ENCODE measurements at regions of chr3 and their contacts with region 1.

Region 1: DNA sequence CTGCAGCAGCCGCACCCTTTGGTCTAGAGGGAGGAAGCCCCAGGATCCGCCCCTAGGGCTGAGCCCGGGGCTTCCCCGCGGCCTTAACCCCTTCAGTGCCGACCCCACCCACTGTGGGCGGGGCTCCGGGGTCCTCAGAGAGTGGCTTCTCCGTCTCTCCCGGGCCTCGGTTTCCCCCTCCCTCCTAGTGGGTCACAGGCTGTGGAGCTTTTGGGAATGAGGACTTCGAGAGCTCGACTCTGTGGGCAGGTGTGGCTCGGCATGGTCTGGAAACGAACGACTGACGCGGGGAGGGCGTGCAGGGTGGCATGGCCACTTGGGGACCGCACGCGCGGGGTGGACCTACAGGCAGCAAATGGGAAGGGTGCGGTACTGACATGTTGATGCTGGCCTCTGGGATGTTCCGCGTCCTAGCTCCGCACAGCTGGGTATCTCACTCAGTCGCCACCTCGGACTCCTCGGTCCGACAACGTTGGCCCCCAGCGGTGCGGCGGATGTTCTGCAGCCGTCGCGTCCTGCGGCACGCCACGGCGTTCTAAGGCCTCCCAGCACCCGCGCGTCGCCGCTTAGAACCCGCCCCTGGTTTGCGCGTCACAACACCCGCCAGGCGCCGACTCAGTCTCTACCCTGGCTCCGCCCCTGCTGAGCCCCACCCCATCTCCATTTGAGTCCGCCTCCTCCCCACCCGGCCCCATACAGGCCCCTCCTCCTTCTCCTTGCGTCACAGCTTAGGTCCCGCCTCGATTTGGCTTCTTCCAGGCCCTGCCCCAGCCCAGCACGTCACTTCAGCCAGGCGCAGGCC is at the starts of genes HYAL3 and NAA80:
- DNase-seq: peak; percentile 100
- H3K4me3 ChIP-seq: peak within 1 kb of the TSS; percentile 74 to 85
- H3K4me3 Mint-ChIP-seq: peak within 1 kb of the TSS; percentile 95 to 100 (median 97)
- H3K27ac ChIP-seq: peak within 1 kb of the TSS; percentile 90
- H3K27ac Mint-ChIP-seq: peak within 1 kb of the TSS; percentile 95 to 100 (median 100)
- H3K4me1 ChIP-seq: peaks cover 25% of the 10 kb centered on the region
- H3K4me1 Mint-ChIP-seq: peaks cover 12 to 47% (median 26%) of the 10 kb centered on the region in 4 donors
- H3K27me3 ChIP-seq: no peaks in the 10 kb centered on the region
- H3K27me3 Mint-ChIP-seq: no peaks in the 10 kb centered on the region
- total RNA-seq, gene HYAL3: 5.1 to 5.4 TPM
- total RNA-seq, gene NAA80: 33.1 to 33.7 TPM

Region 2: DNA sequence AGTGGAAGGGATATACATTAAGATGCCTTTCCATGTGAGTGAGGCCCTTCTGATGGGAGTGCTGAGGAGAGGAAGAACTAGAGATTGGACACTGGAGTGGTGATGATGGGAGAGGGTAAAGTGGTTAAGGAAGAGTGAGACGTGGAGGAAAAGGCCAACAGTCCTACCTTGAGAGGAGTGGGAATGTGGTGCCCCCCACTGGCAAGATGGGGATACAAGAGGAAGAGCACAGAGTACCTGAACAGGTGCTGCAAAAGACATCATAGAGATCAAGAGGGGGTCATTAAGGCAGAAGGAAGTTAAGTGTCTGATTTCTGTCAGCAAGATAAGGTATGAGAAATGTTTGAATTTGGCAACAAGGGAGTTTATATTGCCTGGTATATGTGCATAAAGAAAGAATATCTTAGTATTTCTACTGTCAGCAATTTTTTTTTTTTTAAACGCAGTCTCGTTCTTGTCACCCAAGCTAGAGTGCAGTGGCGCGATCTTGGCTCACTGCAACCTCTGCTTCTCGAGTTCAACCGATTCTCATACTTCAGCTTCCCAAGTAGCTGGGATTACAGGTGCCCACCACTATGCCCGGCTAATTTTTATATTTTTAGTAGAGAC is 1346.4 kb before region 1 on chr3:
- CTCF ChIA-PET with region 1: no interaction called
- POLR2A ChIA-PET with region 1: no interaction called
- intact Hi-C with region 1: no loop called
- DNase-seq: peak; percentile 41 to 58 (median 51)
- H3K4me3 ChIP-seq: no peak overlapping the region
- H3K4me3 Mint-ChIP-seq: no peak overlapping the region
- H3K27ac ChIP-seq: no peak overlapping the region
- H3K27ac Mint-ChIP-seq: peak overlapping the region in 4 of 7 donors; percentile 17 to 78 (median 43)
- H3K4me1 ChIP-seq: peaks cover 6% of the 10 kb centered on the region
- H3K4me1 Mint-ChIP-seq: peaks cover 9 to 18% (median 10%) of the 10 kb centered on the region in 4 donors
- H3K27me3 ChIP-seq: no peaks in the 10 kb centered on the region
- H3K27me3 Mint-ChIP-seq: no peaks in the 10 kb centered on the region

Region 3: GRCh38 chr3:49939858-49940666 is 359.0 kb before region 1 on chr3 and contains the start of gene RBM6:
- CTCF ChIA-PET with region 1: no interaction called
- POLR2A ChIA-PET with region 1: no interaction called
- intact Hi-C with region 1: loop called (anchors 1 kb)
- DNase-seq: peak; percentile 92 to 97 (median 94)
- H3K4me3 ChIP-seq: peak within 1 kb of the TSS; percentile 75 to 96
- H3K4me3 Mint-ChIP-seq: peak within 1 kb of the TSS; percentile 94 to 99 (median 98)
- H3K27ac ChIP-seq: peak within 1 kb of the TSS; percentile 96
- H3K27ac Mint-ChIP-seq: peak within 1 kb of the TSS; percentile 97 to 99 (median 98)
- H3K4me1 ChIP-seq: peaks cover 19% of the 10 kb centered on the region
- H3K4me1 Mint-ChIP-seq: peaks cover 17 to 40% (median 26%) of the 10 kb centered on the region in 4 donors
- H3K27me3 ChIP-seq: no peaks in the 10 kb centered on the region
- H3K27me3 Mint-ChIP-seq: no peaks in the 10 kb centered on the region
- total RNA-seq, gene RBM6: 191 to 194 TPM

Region 4: DNA sequence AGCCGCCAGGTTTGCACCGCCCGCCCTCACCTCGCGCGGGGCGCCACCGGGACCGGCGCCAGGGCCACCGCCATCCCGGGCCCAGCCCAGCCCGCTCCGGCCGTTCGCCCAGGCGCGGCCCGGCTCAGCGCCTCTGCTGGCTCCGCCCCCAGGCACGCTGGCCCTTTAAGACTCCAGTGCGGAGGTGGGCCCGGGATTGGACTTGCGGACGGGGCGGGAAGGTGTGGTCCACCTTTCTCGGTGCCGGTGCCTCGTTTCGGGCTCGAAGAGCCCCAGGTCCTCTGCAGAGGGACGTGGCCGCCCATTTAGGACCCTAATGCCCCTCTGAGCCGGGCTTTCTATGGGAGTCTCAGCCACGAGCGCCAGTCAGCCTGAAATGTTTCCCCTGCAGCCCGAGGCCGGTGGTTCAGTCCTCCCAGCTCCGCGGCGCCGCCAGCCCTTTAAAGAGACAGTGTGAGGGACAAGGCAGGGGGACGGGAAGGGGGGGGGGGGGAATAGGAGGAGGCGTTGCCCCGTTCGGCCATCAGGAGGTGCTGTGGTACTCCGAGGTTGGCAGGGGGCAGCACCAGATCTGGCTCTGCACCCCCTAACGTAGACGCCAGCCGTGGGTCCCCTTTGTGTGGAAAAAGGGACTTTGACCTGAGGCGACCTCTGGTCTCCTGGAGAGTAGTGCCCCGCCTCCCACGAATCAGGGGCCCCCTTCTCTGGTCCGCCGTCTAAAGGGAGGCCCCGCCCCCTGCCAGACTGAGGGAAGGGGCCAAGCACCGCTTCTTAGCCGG is 22.5 kb after region 1 on chr3:
- CTCF ChIA-PET with region 1: interaction called, 37 read pairs
- POLR2A ChIA-PET with region 1: interaction called, 94 read pairs
- intact Hi-C with region 1: loop called (anchors 1 kb)
- DNase-seq: peak; percentile 80 to 88 (median 83)
- H3K4me3 ChIP-seq: peak overlapping the region; percentile 23 to 87
- H3K4me3 Mint-ChIP-seq: peak overlapping the region; percentile 80 to 90 (median 86)
- H3K27ac ChIP-seq: peak overlapping the region; percentile 73
- H3K27ac Mint-ChIP-seq: peak overlapping the region; percentile 90 to 95 (median 93)
- H3K4me1 ChIP-seq: peaks cover 38% of the 10 kb centered on the region
- H3K4me1 Mint-ChIP-seq: peaks cover 18 to 57% (median 38%) of the 10 kb centered on the region in 4 donors
- H3K27me3 ChIP-seq: no peaks in the 10 kb centered on the region
- H3K27me3 Mint-ChIP-seq: no peaks in the 10 kb centered on the region

Region 5: DNA sequence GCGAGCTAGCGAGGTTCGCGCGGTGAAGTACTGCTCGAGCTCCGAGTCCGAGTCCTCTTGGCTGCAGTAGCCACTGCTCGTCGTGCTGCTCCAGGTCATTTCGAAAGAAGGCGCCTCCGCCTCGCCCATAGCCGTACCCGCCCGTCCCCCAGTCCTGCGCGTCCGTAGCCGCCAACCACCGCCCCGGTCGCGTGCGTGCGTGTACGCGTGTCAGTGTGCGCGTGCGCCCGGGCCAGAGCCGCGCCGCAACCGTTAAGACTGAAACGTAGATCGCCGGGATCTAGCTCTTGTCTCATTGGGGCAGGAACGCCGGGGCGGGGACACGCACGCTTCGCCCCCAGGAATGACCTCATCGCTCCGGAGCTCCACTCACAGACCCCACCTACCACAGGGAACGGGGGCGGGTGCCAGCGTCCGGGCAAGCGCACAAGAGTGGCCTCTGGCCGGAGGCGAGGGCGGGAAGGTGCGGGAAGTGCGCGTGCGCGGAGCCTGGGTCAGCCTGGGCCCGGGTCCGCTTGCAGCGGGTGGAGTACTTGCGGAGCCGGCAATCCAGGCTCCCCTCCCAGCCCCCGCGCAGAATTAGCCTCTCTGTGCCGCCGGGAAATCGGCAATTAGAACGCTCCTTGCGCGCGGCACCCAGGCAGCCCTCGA is 38.3 kb after region 1 on chr3:
- CTCF ChIA-PET with region 1: interaction called, 16 read pairs
- POLR2A ChIA-PET with region 1: interaction called, 178 read pairs
- intact Hi-C with region 1: loop called (anchors 1 kb)
- DNase-seq: peak; percentile 89 to 98 (median 92)
- H3K4me3 ChIP-seq: peak overlapping the region; percentile 87 to 94
- H3K4me3 Mint-ChIP-seq: peak overlapping the region; percentile 88 to 98 (median 95)
- H3K27ac ChIP-seq: peak overlapping the region; percentile 96
- H3K27ac Mint-ChIP-seq: peak overlapping the region; percentile 93 to 100 (median 98)
- H3K4me1 ChIP-seq: peaks cover 80% of the 10 kb centered on the region
- H3K4me1 Mint-ChIP-seq: peaks cover 42 to 76% (median 56%) of the 10 kb centered on the region in 4 donors
- H3K27me3 ChIP-seq: no peaks in the 10 kb centered on the region
- H3K27me3 Mint-ChIP-seq: no peaks in the 10 kb centered on the region

Region 6: DNA sequence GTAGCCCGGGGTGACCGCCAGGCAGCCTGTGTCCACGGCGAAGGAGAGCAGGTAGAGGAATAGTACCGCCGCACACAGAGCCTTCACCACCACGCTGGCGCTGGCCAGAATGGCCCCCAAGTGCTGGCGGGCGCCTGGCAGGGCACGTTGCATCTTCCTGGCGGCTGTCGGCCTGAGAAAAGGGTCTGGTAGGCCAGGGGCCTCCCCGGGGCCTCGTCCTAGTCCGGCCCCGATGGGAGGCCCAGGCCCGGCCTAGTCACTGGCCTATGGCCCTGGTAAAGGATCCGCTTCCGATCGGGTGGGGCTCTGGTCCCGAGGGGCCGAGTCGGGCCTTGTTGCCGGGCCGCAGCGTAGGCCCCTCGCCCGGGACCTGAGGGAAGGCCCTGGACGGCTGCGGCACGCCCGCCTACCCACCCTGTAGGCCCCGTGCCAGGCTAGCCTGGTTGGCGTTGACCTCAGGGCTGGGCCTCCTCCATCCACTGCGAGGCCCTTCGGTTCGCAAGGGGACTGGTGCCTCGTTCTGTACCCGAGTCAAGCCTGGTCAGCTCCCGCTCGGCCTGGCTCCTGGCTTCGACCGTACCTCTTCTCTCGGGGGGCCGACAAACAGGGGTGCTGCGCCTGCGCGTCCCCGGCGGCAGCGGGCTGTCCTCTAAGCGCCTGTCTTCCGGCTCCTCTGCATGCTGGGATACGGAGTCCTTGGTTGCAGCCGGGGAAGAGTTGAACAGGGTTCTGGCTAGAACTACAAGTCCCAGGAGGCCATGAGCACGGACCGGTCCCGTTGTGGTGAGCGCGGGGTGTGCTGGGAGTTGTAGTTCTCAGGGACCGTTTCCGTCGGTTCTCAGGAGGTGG is 60.1 kb after region 1 on chr3 and contains the start of gene TMEM115:
- CTCF ChIA-PET with region 1: no interaction called
- POLR2A ChIA-PET with region 1: interaction called, 12 read pairs
- intact Hi-C with region 1: loop called (anchors 1 kb)
- DNase-seq: peak; percentile 93 to 99 (median 96)
- H3K4me3 ChIP-seq: peak within 1 kb of the TSS; percentile 78 to 95
- H3K4me3 Mint-ChIP-seq: peak within 1 kb of the TSS; percentile 95 to 100 (median 98)
- H3K27ac ChIP-seq: peak within 1 kb of the TSS; percentile 97
- H3K27ac Mint-ChIP-seq: peak within 1 kb of the TSS; percentile 96 to 98 (median 98)
- H3K4me1 ChIP-seq: peaks cover 44% of the 10 kb centered on the region
- H3K4me1 Mint-ChIP-seq: peaks cover 30 to 49% (median 39%) of the 10 kb centered on the region in 4 donors
- H3K27me3 ChIP-seq: no peaks in the 10 kb centered on the region
- H3K27me3 Mint-ChIP-seq: no peaks in the 10 kb centered on the region
- total RNA-seq, gene TMEM115: 31.1 to 34.6 TPM

Region 7: DNA sequence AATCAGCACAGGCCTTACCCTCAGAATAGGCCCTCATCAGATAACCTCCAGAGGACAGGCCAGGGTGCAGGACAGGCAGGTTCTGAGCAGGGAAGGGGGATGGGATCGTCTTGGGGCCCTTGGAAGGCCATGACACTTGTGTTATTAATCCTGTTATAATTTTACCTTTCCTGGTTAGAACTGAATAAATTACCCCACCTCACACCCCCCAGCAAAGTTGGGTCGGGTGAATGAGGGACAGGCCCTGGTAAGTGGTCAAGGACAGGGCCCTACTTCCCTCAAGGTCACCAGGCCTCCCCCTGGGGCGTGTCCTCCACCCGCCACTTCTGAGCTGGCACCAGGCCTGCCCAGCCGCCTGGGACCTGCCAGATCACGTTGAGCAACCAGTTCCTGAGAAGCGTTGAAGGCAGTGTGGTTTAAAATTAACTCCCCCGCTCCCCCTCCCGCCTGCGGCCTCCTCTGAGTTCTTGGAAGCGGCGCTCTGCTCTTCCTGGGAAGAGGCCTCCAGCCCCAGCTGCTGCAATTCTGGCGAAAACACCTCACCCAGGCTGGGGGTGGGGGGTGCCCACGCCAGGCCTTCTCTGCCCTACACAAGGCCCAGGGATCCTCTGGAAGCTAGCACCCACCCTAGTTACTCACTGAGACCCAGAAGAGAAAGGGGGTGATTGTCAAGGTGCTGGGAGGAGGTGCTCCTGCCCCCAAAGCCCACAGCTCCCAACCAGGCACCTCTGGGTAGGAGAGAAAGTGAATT is 302.0 kb after region 1 on chr3:
- CTCF ChIA-PET with region 1: no interaction called
- POLR2A ChIA-PET with region 1: no interaction called
- intact Hi-C with region 1: loop called (anchors 1 kb)
- DNase-seq: peak; percentile 62 to 80 (median 65)
- H3K4me3 ChIP-seq: peak overlapping the region in 1 of 2 donors; percentile 37
- H3K4me3 Mint-ChIP-seq: peak overlapping the region; percentile 75 to 99 (median 84)
- H3K27ac ChIP-seq: peak overlapping the region; percentile 81
- H3K27ac Mint-ChIP-seq: peak overlapping the region; percentile 90 to 99 (median 95)
- H3K4me1 ChIP-seq: peaks cover 79% of the 10 kb centered on the region
- H3K4me1 Mint-ChIP-seq: peaks cover 58 to 83% (median 69%) of the 10 kb centered on the region in 4 donors
- H3K27me3 ChIP-seq: no peaks in the 10 kb centered on the region
- H3K27me3 Mint-ChIP-seq: no peaks in the 10 kb centered on the region